HepG2 (cell line): ENCODE measurements at regions of chr16 and their contacts with region 1.

Region 1: DNA sequence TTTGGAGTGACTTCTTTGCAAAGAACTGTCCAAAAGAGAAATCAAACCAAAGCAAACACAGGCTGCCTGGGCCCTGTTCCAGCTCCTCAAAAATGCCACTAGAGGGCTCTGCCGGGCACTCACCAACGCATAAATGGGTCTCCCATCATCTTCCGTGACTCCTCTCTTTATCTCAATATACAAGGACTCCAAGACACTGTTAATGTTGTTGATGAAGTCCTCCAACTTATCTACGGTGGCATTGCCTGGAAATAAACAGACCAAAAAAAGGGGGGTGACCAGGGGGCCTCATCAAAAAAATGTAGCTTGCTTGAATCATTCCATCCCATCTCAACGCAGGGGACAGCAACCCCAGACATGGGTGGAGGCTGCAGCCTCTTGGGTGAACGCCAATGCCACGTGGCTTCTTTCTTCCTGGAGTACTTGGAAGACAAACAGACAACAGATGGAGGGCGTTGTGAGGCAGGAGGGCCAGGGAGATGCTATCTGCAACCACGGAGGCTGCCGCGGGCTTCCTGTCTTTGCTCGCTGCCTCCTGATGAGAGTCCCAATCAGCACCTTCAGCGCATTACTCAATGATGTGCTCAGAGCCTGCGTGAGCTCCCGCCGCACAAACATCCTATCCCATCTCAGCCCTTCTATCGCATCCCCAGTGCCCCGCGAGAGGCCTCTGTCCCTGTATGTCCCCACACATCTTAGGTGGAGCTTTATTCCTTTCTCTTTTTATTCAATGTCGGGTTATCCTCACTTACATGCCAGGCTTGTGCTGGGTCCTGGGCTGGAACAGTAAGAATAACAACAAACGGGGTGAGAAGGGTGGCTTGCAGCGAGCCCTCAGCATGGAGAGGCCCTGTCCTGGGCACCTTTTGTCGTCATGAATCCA is 32.0 kb downstream of the KDM8 start:
- DNase-seq: peak; percentile 60
- ATAC-seq: peak; percentile 77
- H3K4me3 ChIP-seq: no peak overlapping the region
- H3K27ac ChIP-seq: no peak overlapping the region
- H3K4me1 ChIP-seq: no peaks in the 10 kb centered on the region
- H3K27me3 ChIP-seq: no peaks in the 10 kb centered on the region
- CTCF ChIP-seq: peak; percentile 85
- EP300 ChIP-seq: no peak
- POLR2A ChIP-seq: no peak
- RAD21 ChIP-seq: peak; percentile 88

Region 2: GRCh38 chr16:25691519-25692091 is 1543.7 kb before region 1 on chr16 and contains the start of gene HS3ST4:
- CTCF ChIA-PET with region 1: no interaction called
- POLR2A ChIA-PET with region 1: no interaction called
- in situ Hi-C with region 1: no loop called
- intact Hi-C with region 1: no loop called
- DNase-seq: no peak
- ATAC-seq: peak; percentile 45
- H3K4me3 ChIP-seq: peak within 1 kb of the TSS in 2 of 3 experiments; percentile 17 to 43; a peak in 2 of 6 replicates
- H3K27ac ChIP-seq: no peak within 1 kb of the TSS
- H3K4me1 ChIP-seq: peaks cover 17% of the 10 kb centered on the region; the same call in 1 of the 2 replicates
- H3K27me3 ChIP-seq: peaks cover 14 to 64% of the 10 kb centered on the region in 2 experiments
- CTCF ChIP-seq: no peak
- EP300 ChIP-seq: no peak
- POLR2A ChIP-seq: no peak
- RAD21 ChIP-seq: no peak
- total RNA-seq, gene HS3ST4: not detected in 2 replicates

Region 3: DNA sequence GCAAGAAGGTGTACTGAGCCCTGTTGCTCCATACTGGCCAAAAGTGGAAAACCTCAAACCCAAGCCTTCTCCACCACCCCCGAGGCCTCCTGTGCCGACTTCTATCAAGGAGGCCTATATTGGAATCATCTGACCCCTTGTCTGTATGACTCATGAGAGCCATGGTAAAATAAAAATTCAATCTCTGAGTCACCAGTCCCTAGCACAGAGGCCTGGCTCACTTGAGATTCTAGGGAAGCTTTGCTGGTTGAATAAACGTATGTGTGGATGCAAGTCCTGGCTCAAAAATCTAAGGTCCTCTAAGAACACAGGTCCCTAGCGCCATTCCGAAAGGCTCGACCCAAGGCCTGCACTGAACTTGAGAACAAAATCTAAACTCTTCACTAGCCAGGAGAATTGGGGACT is 18.2 kb after region 1 on chr16:
- CTCF ChIA-PET with region 1: no interaction called
- POLR2A ChIA-PET with region 1: no interaction called
- in situ Hi-C with region 1: no loop called
- intact Hi-C with region 1: no loop called
- DNase-seq: no peak
- ATAC-seq: no peak
- H3K4me3 ChIP-seq: no peak overlapping the region
- H3K27ac ChIP-seq: no peak overlapping the region
- H3K4me1 ChIP-seq: peaks cover 14% of the 10 kb centered on the region
- H3K27me3 ChIP-seq: no peaks in the 10 kb centered on the region
- CTCF ChIP-seq: no peak
- EP300 ChIP-seq: no peak
- POLR2A ChIP-seq: no peak
- RAD21 ChIP-seq: no peak

Region 4: DNA sequence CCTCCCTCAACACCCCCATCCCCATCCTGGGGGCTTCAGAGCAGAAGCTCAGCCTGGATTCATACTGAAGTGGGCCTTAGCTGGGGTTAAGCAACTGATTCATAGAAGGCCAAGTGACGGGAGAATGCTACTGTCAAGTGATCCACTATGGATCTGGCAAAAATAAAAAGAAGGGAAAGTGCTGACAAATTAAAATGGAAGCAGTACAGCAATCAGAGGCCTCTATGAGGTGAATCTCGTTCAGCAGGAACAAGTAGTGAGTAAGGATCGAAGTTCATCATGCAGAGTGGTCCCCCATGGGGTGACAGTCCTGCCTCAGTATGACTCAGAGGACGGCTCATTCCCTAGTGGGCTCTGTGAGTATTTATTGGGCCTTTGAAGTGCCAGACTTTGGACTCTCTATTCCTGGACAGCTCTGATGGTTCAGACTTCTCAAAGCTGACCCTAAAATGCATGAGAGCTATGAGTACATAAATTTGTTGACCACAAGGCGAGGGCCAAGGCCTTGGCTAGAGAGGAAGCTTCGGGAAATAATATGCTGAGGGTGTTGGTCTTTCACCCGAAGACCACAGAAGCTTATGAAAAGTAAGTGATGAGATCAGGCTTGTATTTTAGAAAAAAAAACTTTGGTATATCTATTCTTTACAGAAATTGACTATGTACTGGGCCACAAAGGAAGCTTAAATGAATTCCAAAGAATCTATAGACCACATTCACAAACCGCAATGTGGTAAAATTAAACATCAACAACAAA is 38.6 kb after region 1 on chr16:
- CTCF ChIA-PET with region 1: no interaction called
- POLR2A ChIA-PET with region 1: interaction called, 11 read pairs
- in situ Hi-C with region 1: no loop called
- intact Hi-C with region 1: no loop called
- DNase-seq: peak; percentile 100
- ATAC-seq: peak; percentile 98
- H3K4me3 ChIP-seq: peak overlapping the region; percentile 9 to 55 (median 24); a peak in 4 of 6 replicates
- H3K27ac ChIP-seq: peak overlapping the region; percentile 96
- H3K4me1 ChIP-seq: peaks cover 62% of the 10 kb centered on the region
- H3K27me3 ChIP-seq: no peaks in the 10 kb centered on the region
- CTCF ChIP-seq: peak; percentile 40; the same call in 1 of the 2 replicates
- EP300 ChIP-seq: peak; percentile 97 to 98
- POLR2A ChIP-seq: peak in 1 of 2 experiments; percentile 43; a peak in 1 of 4 replicates
- RAD21 ChIP-seq: peak; percentile 81

Region 5: GRCh38 chr16:27313422-27314160 is 78.3 kb after region 1 on chr16 and contains the start of gene IL4R:
- CTCF ChIA-PET with region 1: no interaction called
- POLR2A ChIA-PET with region 1: no interaction called
- in situ Hi-C with region 1: no loop called
- intact Hi-C with region 1: loop called (anchors 1 kb)
- DNase-seq: peak; percentile 94
- ATAC-seq: peak; percentile 84
- H3K4me3 ChIP-seq: peak within 1 kb of the TSS; percentile 88 to 99 (median 97)
- H3K27ac ChIP-seq: peak within 1 kb of the TSS; percentile 75
- H3K4me1 ChIP-seq: peaks cover 74% of the 10 kb centered on the region
- H3K27me3 ChIP-seq: peaks cover 1 to 17% of the 10 kb centered on the region in 2 experiments; a peak in 3 of 5 replicates
- CTCF ChIP-seq: no peak
- EP300 ChIP-seq: peak in 1 of 2 experiments; percentile 32; a peak in 1 of 4 replicates
- POLR2A ChIP-seq: peak; percentile 63 to 91
- RAD21 ChIP-seq: peak; percentile 23
- total RNA-seq, gene IL4R: 7.6 and 15.9 TPM in 2 replicates

Region 6: GRCh38 chr16:27367461-27368357 is 132.4 kb after region 1 on chr16:
- CTCF ChIA-PET with region 1: interaction called, 29 read pairs
- POLR2A ChIA-PET with region 1: no interaction called
- in situ Hi-C with region 1: loop called (anchors 5 kb)
- intact Hi-C with region 1: loop called (anchors 1 kb)
- DNase-seq: peak; percentile 56
- ATAC-seq: peak; percentile 66
- H3K4me3 ChIP-seq: peak overlapping the region in 1 of 3 experiments; percentile 55; a peak in 2 of 6 replicates
- H3K27ac ChIP-seq: no peak overlapping the region
- H3K4me1 ChIP-seq: peaks cover 65% of the 10 kb centered on the region
- H3K27me3 ChIP-seq: no peaks in the 10 kb centered on the region
- CTCF ChIP-seq: peak; percentile 94
- EP300 ChIP-seq: 0 out of 4 replicates have a peak, but pooled peaks of 1 of the 2 experiments have one; percentile 18
- POLR2A ChIP-seq: no peak
- RAD21 ChIP-seq: peak; percentile 95

Region 7: DNA sequence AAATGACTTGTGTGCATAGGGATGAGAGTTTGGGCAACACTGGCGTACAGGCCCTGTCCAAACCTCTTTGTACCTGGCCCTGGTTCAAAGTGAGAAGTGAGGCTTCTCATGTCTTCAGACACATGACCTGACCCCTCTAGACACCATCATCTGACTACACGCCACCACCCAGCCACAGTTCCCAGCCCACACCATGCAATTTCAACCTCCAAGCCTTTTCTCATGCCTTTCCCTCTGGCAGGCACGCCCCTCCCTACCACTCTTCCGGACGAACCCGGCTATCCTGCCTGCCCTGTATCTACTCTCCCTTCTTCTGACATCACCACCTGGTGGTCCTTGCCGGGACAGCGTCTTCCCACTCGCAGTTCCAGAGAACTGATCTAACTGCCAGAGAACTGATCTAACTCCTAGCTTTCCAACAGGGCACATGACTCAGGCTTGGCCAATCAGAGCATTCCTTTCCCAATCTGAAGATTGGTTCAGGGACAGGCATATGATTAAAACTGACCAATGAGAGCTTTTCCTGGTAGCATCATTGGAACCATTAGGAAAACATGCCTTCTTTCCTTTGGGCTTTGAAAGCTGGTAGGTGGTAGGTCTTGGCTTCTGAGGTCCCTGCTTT is 139.6 kb after region 1 on chr16:
- CTCF ChIA-PET with region 1: interaction called, 12 read pairs
- POLR2A ChIA-PET with region 1: interaction called, 5 read pairs
- in situ Hi-C with region 1: no loop called
- intact Hi-C with region 1: no loop called
- DNase-seq: peak; percentile 92
- ATAC-seq: peak; percentile 98
- H3K4me3 ChIP-seq: peak overlapping the region in 2 of 3 experiments; percentile 5 to 38; a peak in 1 of 6 replicates
- H3K27ac ChIP-seq: no peak overlapping the region
- H3K4me1 ChIP-seq: peaks cover 18% of the 10 kb centered on the region
- H3K27me3 ChIP-seq: peaks cover under 1 to 7% of the 10 kb centered on the region in 2 experiments; a peak in 2 of 5 replicates
- CTCF ChIP-seq: peak; percentile 94
- EP300 ChIP-seq: no peak
- POLR2A ChIP-seq: peak in 1 of 2 experiments; percentile 44; a peak in 1 of 4 replicates
- RAD21 ChIP-seq: peak; percentile 72

Region 8: GRCh38 chr16:27455700-27456099 is 220.4 kb after region 1 on chr16:
- CTCF ChIA-PET with region 1: interaction called, 4 read pairs
- POLR2A ChIA-PET with region 1: no interaction called
- in situ Hi-C with region 1: no loop called
- intact Hi-C with region 1: loop called (anchors 2 kb)
- DNase-seq: no peak
- ATAC-seq: no peak
- H3K4me3 ChIP-seq: no peak overlapping the region
- H3K27ac ChIP-seq: no peak overlapping the region
- H3K4me1 ChIP-seq: no peaks in the 10 kb centered on the region
- H3K27me3 ChIP-seq: peaks cover 2 to 21% of the 10 kb centered on the region in 2 experiments; a peak in 3 of 5 replicates
- CTCF ChIP-seq: no peak
- EP300 ChIP-seq: no peak
- POLR2A ChIP-seq: no peak
- RAD21 ChIP-seq: no peak